RWPE1 (cell line): ENCODE measurements at regions of chr5 and their contacts with region 1.

Region 1: GRCh38 chr5:96919754-96920197 is 16.1 kb upstream of the LNPEP start:
- DNase-seq: no peak
- H3K27ac ChIP-seq: no peak overlapping the region
- CTCF ChIP-seq: no peak

Region 2: DNA sequence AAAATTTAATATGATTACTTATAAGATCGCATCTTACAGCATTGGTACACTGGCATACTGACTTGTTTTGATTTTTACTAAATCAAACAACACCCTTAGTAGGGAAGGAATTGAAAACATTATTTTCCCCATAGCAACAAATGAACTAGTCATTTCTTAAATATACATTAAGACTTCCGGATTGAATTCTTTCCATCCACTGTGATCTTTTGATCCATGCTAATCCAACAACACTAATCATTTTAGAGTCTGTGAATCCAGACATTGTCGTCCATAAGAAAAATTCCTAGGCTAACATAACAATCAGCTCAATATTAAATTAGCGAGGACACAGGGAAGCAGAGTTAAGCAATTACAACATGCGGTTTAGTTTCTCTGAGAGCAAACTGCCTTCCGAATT is 90.5 kb before region 1 on chr5:
- CTCF ChIA-PET with region 1: no interaction called
- POLR2A ChIA-PET with region 1: no interaction called
- DNase-seq: no peak
- H3K27ac ChIP-seq: no peak overlapping the region
- CTCF ChIP-seq: no peak

Region 3: GRCh38 chr5:97002983-97003382 is 83.2 kb after region 1 on chr5:
- CTCF ChIA-PET with region 1: no interaction called
- POLR2A ChIA-PET with region 1: interaction called, 10 read pairs
- DNase-seq: no peak
- H3K27ac ChIP-seq: no peak overlapping the region
- CTCF ChIP-seq: no peak